CD4-positive, alpha-beta memory T cell (primary cell): ENCODE measurements at regions of chr2 and their contacts with region 1.

Region 1: GRCh38 chr2:219041252-219041651 is at the start of gene CFAP65:
- DNase-seq: peak in 3 of 5 donors; percentile 25 to 36 (median 29)
- H3K4me3 ChIP-seq: no peak within 1 kb of the TSS
- H3K4me3 Mint-ChIP-seq: peak within 1 kb of the TSS; percentile 14 to 80 (median 71)
- H3K27ac ChIP-seq: no peak within 1 kb of the TSS
- H3K27ac Mint-ChIP-seq: no peak within 1 kb of the TSS
- H3K4me1 ChIP-seq: peaks cover 9% of the 10 kb centered on the region
- H3K4me1 Mint-ChIP-seq: peaks cover 6 to 14% (median 8%) of the 10 kb centered on the region in 4 donors
- H3K27me3 ChIP-seq: peaks cover 15% of the 10 kb centered on the region
- H3K27me3 Mint-ChIP-seq: peaks cover 49 to 56% of the 10 kb centered on the region in 2 donors
- total RNA-seq, gene CFAP65: not detected

Region 2: DNA sequence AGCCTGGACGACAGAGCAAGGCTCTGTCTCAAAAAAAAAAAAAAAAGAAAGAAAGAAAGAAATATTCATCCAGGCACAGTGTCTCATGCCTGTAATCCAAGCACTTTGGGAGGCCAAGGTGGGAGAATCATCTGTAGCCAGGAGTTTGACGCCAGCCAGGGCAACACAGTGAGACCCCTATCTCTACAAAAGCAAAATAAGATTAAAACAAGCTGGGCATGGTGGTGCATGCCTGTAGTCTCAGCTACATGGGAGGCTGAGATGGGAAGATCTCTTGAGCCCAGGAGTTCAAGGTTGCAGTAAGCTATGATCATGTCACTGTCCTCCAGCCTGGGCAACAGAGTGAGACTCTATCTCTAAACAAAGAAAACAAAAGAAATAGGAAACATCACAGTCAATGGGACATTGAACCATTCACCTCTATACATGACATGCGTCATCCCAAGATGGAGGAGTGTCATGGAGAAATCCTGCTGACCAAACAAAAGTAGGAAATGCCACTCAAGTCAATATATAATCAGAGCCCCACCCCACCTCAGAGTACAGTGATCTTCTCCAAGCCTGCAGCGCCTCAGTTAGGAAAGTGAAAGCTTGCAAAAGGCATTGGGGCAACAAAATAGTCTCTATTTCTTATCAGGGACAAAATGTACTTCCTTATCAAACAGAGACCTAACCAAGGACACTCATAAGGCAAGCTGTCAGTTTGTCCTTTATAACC is 66.0 kb before region 1 on chr2:
- CTCF ChIA-PET with region 1: no interaction called
- POLR2A ChIA-PET with region 1: no interaction called
- intact Hi-C with region 1: no loop called
- DNase-seq: no peak
- H3K4me3 ChIP-seq: no peak overlapping the region
- H3K4me3 Mint-ChIP-seq: no peak overlapping the region
- H3K27ac ChIP-seq: no peak overlapping the region
- H3K27ac Mint-ChIP-seq: no peak overlapping the region
- H3K4me1 ChIP-seq: peaks cover 8% of the 10 kb centered on the region
- H3K4me1 Mint-ChIP-seq: peaks cover 0 to 7% (median 3%) of the 10 kb centered on the region in 4 donors
- H3K27me3 ChIP-seq: peaks cover 12% of the 10 kb centered on the region
- H3K27me3 Mint-ChIP-seq: peaks cover 48 to 68% of the 10 kb centered on the region in 2 donors

Region 3: DNA sequence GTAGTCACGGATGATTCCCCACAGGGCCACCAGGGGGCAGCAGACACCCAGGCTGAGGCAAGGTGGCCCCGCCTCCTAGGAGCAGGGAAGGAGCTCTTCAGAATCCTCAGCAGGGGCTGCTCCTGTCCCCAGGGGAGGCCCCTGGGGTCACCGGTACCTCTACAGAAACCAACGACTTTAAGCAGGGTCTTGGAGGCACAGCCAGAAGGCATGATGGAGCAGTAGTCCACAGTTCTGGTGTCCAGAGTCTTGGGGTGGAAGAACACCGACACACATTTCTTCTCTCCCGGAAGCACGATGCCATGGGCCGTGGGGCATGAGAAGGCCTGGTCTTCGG is 11.5 kb before region 1 on chr2:
- CTCF ChIA-PET with region 1: interaction called, 13 read pairs
- POLR2A ChIA-PET with region 1: no interaction called
- intact Hi-C with region 1: no loop called
- DNase-seq: peak; percentile 69 to 76 (median 73)
- H3K4me3 ChIP-seq: no peak overlapping the region
- H3K4me3 Mint-ChIP-seq: no peak overlapping the region
- H3K27ac ChIP-seq: no peak overlapping the region
- H3K27ac Mint-ChIP-seq: peak overlapping the region in 1 of 7 donors; percentile 21
- H3K4me1 ChIP-seq: no peaks in the 10 kb centered on the region
- H3K4me1 Mint-ChIP-seq: peaks cover 0 to 1% (median 0%) of the 10 kb centered on the region in 4 donors
- H3K27me3 ChIP-seq: no peaks in the 10 kb centered on the region
- H3K27me3 Mint-ChIP-seq: peaks cover 16 to 21% of the 10 kb centered on the region in 2 donors